ENCODE measurements at regions of chr12 and their contacts with region 1.

Region 1: GRCh38 chr12:48977315-48978281 is 524 bp upstream of the WNT1 start:
- DNase-seq: peak; percentile 61 to 86
- H3K4me3 ChIP-seq: peak overlapping the region; percentile 48
- H3K4me3 Mint-ChIP-seq: peak overlapping the region; percentile 0
- H3K27ac Mint-ChIP-seq: no peak overlapping the region
- H3K4me1 ChIP-seq: peaks cover 23% of the 10 kb centered on the region
- H3K4me1 Mint-ChIP-seq: peaks cover 17% of the 10 kb centered on the region
- H3K27me3 ChIP-seq: peaks cover 14% of the 10 kb centered on the region
- H3K27me3 Mint-ChIP-seq: peaks cover 23% of the 10 kb centered on the region
- CTCF ChIP-seq: peak; percentile 79 to 91

Region 2: DNA sequence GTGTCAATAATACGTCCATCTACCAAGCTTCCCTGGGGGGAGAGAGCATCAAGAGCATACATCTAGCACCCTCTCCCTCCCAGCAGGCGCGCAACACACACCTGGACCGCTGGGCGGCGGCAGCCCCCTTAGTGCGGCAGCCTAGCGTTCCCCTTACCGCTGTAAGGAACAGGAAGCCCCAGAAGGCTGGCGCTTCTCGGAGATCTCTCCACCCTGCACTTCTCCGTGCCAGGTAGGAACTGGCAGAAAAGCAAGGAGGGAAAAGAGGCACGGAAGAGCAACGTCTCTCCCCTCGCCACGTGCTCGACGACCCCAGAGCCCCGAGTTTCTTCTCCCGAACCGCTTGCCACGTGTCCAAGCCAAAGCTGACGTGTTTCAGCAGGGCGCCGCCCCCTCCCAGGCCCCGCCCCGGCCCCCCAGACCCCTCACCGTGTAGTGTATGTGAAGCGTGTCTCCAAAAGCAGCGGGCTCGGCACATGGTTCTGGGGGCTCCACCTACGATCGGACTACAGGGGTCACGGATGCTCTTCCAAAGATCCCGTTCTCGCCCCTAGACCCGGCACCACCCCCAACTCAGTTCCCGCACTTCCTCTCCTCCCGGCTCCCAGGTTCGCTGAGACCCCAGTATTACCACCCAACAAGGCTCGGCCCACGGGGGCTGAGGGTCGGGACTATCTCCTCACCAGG is 52.8 kb before region 1 on chr12:
- CTCF ChIA-PET with region 1: interaction called, 5 read pairs
- POLR2A ChIA-PET with region 1: no interaction called
- intact Hi-C with region 1: loop called (anchors 5 kb)
- DNase-seq: peak; percentile 81 to 85
- H3K4me3 ChIP-seq: peak overlapping the region; percentile 73
- H3K4me3 Mint-ChIP-seq: peak overlapping the region; percentile 83
- H3K27ac Mint-ChIP-seq: peak overlapping the region; percentile 76
- H3K4me1 ChIP-seq: peaks cover 5% of the 10 kb centered on the region; the same call in 1 of the 2 replicates
- H3K4me1 Mint-ChIP-seq: no peaks in the 10 kb centered on the region
- H3K27me3 ChIP-seq: no peaks in the 10 kb centered on the region
- H3K27me3 Mint-ChIP-seq: no peaks in the 10 kb centered on the region
- CTCF ChIP-seq: peak; percentile 72 to 96

Region 3: DNA sequence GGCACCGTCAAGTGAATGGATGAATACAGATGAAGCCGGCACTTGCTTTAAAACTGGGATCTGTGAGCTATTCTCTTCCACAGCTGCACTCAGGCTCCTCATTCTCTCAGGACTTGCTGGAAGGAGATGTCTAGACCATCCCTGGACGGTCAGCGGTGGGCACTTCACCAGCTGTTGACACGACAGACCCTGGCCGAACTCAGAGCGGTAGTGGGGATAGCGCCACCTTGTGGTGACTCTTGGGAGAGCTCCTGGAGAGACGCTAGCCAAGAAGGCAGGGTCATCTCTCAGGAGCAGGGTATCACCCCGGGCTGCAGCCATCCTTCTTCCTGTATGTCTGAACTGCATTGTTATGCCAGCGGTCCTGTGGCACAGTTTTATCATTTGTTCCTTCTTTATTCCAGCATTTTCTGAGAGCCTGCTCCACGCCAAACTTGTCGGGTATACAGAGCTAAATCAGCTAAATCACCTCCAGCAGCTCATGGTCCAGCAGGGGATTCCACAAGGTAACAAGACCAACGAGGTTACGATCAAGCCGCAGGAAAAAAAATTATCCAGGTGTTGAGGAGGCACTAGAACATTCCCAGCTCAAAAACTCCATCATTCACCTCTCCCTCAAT is 10.5 kb after region 1 on chr12:
- CTCF ChIA-PET with region 1: interaction called, 38 read pairs
- POLR2A ChIA-PET with region 1: no interaction called
- intact Hi-C with region 1: no loop called
- DNase-seq: peak; percentile 67 to 81
- H3K4me3 ChIP-seq: no peak overlapping the region
- H3K4me3 Mint-ChIP-seq: no peak overlapping the region
- H3K27ac Mint-ChIP-seq: no peak overlapping the region
- H3K4me1 ChIP-seq: no peaks in the 10 kb centered on the region
- H3K4me1 Mint-ChIP-seq: no peaks in the 10 kb centered on the region
- H3K27me3 ChIP-seq: no peaks in the 10 kb centered on the region; the same call in 1 of the 2 replicates
- H3K27me3 Mint-ChIP-seq: peaks cover 18% of the 10 kb centered on the region
- CTCF ChIP-seq: peak; percentile 87 to 89

Region 4: GRCh38 chr12:49018261-49019119 is 40.9 kb after region 1 on chr12 and contains the start of gene PRKAG1:
- CTCF ChIA-PET with region 1: interaction called, 10 read pairs
- POLR2A ChIA-PET with region 1: no interaction called
- intact Hi-C with region 1: loop called (anchors 1 kb)
- DNase-seq: peak; percentile 97 to 98
- H3K4me3 ChIP-seq: peak within 1 kb of the TSS; percentile 73
- H3K4me3 Mint-ChIP-seq: peak within 1 kb of the TSS; percentile 91
- H3K27ac Mint-ChIP-seq: peak within 1 kb of the TSS; percentile 98
- H3K4me1 ChIP-seq: 0 out of 2 replicates have a peak, but pooled peaks cover 4% of the 10 kb centered on the region
- H3K4me1 Mint-ChIP-seq: peaks cover 19% of the 10 kb centered on the region
- H3K27me3 ChIP-seq: no peaks in the 10 kb centered on the region
- H3K27me3 Mint-ChIP-seq: no peaks in the 10 kb centered on the region
- CTCF ChIP-seq: peak; percentile 40 to 77
- total RNA-seq, gene PRKAG1: 60.3 and 61.4 TPM in 2 replicates

Region 5: GRCh38 chr12:49198431-49199155 is 221.0 kb after region 1 on chr12:
- CTCF ChIA-PET with region 1: no interaction called
- POLR2A ChIA-PET with region 1: no interaction called
- intact Hi-C with region 1: no loop called
- DNase-seq: peak in 1 of 2 experiments; percentile 4
- H3K4me3 ChIP-seq: no peak overlapping the region
- H3K4me3 Mint-ChIP-seq: no peak overlapping the region
- H3K27ac Mint-ChIP-seq: no peak overlapping the region
- H3K4me1 ChIP-seq: no peaks in the 10 kb centered on the region
- H3K4me1 Mint-ChIP-seq: peaks cover 6% of the 10 kb centered on the region
- H3K27me3 ChIP-seq: no peaks in the 10 kb centered on the region
- H3K27me3 Mint-ChIP-seq: peaks cover 21% of the 10 kb centered on the region
- CTCF ChIP-seq: no peak